ENCODE measurements at regions of chr10 and their contacts with region 1.

Region 1: GRCh38 chr10:14500172-14500765 is 169.5 kb upstream of the FRMD4A start:
- DNase-seq: no peak
- H3K4me3 Mint-ChIP-seq: no peak overlapping the region
- H3K27ac Mint-ChIP-seq: no peak overlapping the region
- H3K4me1 Mint-ChIP-seq: peaks cover 11% of the 10 kb centered on the region
- H3K27me3 Mint-ChIP-seq: no peaks in the 10 kb centered on the region

Region 2: GRCh38 chr10:14185316-14186045 is 314.8 kb before region 1 on chr10:
- CTCF ChIA-PET with region 1: no interaction called
- intact Hi-C with region 1: no loop called
- DNase-seq: peak; percentile 73
- H3K4me3 Mint-ChIP-seq: peak overlapping the region; percentile 61
- H3K27ac Mint-ChIP-seq: peak overlapping the region; percentile 96
- H3K4me1 Mint-ChIP-seq: peaks cover 29% of the 10 kb centered on the region
- H3K27me3 Mint-ChIP-seq: peaks cover 27% of the 10 kb centered on the region

Region 3: GRCh38 chr10:14543046-14543903 is 43.0 kb after region 1 on chr10:
- CTCF ChIA-PET with region 1: interaction called, 7 read pairs
- intact Hi-C with region 1: loop called (anchors 1 kb)
- DNase-seq: peak; percentile 73
- H3K4me3 Mint-ChIP-seq: peak overlapping the region; percentile 30
- H3K27ac Mint-ChIP-seq: peak overlapping the region; percentile 83
- H3K4me1 Mint-ChIP-seq: peaks cover 79% of the 10 kb centered on the region
- H3K27me3 Mint-ChIP-seq: no peaks in the 10 kb centered on the region

Region 4: GRCh38 chr10:14592026-14592425 is 91.8 kb after region 1 on chr10:
- CTCF ChIA-PET with region 1: no interaction called
- intact Hi-C with region 1: no loop called
- DNase-seq: no peak
- H3K4me3 Mint-ChIP-seq: no peak overlapping the region
- H3K27ac Mint-ChIP-seq: no peak overlapping the region
- H3K4me1 Mint-ChIP-seq: peaks cover 76% of the 10 kb centered on the region
- H3K27me3 Mint-ChIP-seq: no peaks in the 10 kb centered on the region

Region 5: GRCh38 chr10:14837757-14838581 is 337.7 kb after region 1 on chr10 and contains the starts of genes CDNF, HSPA14 and MSANTD7:
- CTCF ChIA-PET with region 1: interaction called, 6 read pairs
- intact Hi-C with region 1: loop called (anchors 1 kb)
- DNase-seq: peak; percentile 99
- H3K4me3 Mint-ChIP-seq: peak within 1 kb of the TSS; percentile 92
- H3K27ac Mint-ChIP-seq: peak within 1 kb of the TSS; percentile 93
- H3K4me1 Mint-ChIP-seq: peaks cover 22% of the 10 kb centered on the region
- H3K27me3 Mint-ChIP-seq: no peaks in the 10 kb centered on the region
- total RNA-seq, gene CDNF: 1.6 to 1.8 TPM
- total RNA-seq, gene HSPA14: 28.1 to 29.9 TPM
- total RNA-seq, gene MSANTD7: 19.6 to 21.3 TPM

Region 6: GRCh38 chr10:14971867-14972448 is 471.7 kb after region 1 on chr10:
- CTCF ChIA-PET with region 1: no interaction called
- intact Hi-C with region 1: loop called (anchors 1 kb)
- DNase-seq: peak; percentile 70
- H3K4me3 Mint-ChIP-seq: no peak overlapping the region
- H3K27ac Mint-ChIP-seq: no peak overlapping the region
- H3K4me1 Mint-ChIP-seq: no peaks in the 10 kb centered on the region
- H3K27me3 Mint-ChIP-seq: peaks cover 11% of the 10 kb centered on the region

Measured in activated naive CD4-positive, alpha-beta T cell treated with anti-CD3 and anti-CD28 coated beads for 36 hours (primary cell).